Esophagus muscularis mucosa (tissue), 4 donors: ENCODE measurements at regions of chr9 and their contacts with region 1.

Region 1: GRCh38 chr9:5437254-5438216 is at the start of gene PLGRKT:
- DNase-seq: peak; percentile 99
- H3K4me3 ChIP-seq: peak within 1 kb of the TSS; percentile 60 to 67 (median 66)
- H3K27ac ChIP-seq: peak within 1 kb of the TSS; percentile 87 to 94 (median 88)
- H3K4me1 ChIP-seq: peaks cover 16 to 27% (median 21%) of the 10 kb centered on the region in 4 donors
- H3K27me3 ChIP-seq: no peaks in the 10 kb centered on the region
- CTCF ChIP-seq: peak; percentile 18 to 27 (median 22)
- EP300 ChIP-seq: no peak
- POLR2A ChIP-seq: peak; percentile 70
- total RNA-seq, gene PLGRKT: 11.1 to 18.3 (median 11.7) TPM

Region 2: GRCh38 chr9:5095795-5096194 is 341.7 kb before region 1 on chr9:
- intact Hi-C with region 1: no loop called
- DNase-seq: no peak
- H3K4me3 ChIP-seq: no peak overlapping the region
- H3K27ac ChIP-seq: no peak overlapping the region
- H3K4me1 ChIP-seq: no peaks in the 10 kb centered on the region
- H3K27me3 ChIP-seq: no peaks in the 10 kb centered on the region
- CTCF ChIP-seq: no peak
- EP300 ChIP-seq: no peak
- POLR2A ChIP-seq: no peak

Region 3: GRCh38 chr9:5278486-5278885 is 159.0 kb before region 1 on chr9:
- intact Hi-C with region 1: no loop called
- DNase-seq: no peak
- H3K4me3 ChIP-seq: no peak overlapping the region
- H3K27ac ChIP-seq: no peak overlapping the region
- H3K4me1 ChIP-seq: no peaks in the 10 kb centered on the region
- H3K27me3 ChIP-seq: no peaks in the 10 kb centered on the region
- CTCF ChIP-seq: no peak
- EP300 ChIP-seq: no peak
- POLR2A ChIP-seq: no peak

Region 4: DNA sequence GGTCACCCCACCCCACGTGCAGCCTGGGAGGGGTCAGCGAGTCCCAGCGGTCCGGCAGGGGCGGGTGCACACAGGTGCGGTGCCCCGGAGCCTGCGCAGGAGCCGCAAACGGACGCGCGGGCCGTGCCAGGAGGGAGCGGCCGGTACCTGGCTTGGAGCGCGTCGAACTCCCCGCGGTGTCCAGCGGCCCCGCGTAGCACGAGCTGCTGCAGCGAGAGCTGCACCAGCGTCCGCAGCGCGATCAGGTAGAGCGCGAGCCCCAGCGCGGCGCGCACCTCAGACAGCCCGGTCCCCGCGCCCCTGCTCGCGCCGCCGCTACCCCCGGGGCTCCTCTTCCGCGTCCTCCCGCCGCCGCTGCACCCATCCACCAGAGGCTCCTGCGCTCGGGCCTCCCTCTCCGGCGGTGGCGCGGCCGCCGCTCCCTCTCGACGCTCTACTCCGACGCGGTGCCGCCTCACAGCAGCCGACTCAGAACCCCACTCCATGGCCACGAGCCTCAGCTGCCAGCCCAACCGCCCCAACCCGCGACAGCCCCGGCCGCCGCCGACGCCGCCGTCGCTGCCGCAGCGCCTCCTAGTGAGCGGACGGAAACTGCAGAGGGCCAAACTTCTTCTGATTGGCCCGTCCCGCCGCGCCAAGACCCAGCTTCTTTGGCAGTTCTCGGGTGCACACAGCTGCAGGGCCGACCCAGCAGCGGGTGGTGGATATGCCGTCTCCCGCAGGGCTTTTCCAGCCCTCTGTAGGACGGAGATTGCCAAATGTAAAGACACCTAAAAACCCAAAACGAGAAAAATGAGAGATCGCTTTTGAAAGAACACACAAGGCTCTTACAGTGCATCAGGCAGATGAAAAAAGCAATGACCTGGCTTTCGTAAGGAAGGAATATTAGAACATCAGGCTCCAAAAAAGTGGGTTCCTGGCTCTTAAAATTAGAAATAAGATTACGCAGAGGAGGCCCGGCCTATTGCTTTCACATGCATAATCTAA is 395.3 kb after region 1 on chr9 and contains the start of gene ERMP1:
- intact Hi-C with region 1: loop called (anchors 5 kb)
- DNase-seq: peak; percentile 94
- H3K4me3 ChIP-seq: peak within 1 kb of the TSS; percentile 73 to 87 (median 84)
- H3K27ac ChIP-seq: peak within 1 kb of the TSS; percentile 74 to 81 (median 79)
- H3K4me1 ChIP-seq: peaks cover 11 to 31% (median 26%) of the 10 kb centered on the region in 4 donors
- H3K27me3 ChIP-seq: no peaks in the 10 kb centered on the region
- CTCF ChIP-seq: peak; percentile 78 to 96 (median 79)
- EP300 ChIP-seq: no peak
- POLR2A ChIP-seq: peak; percentile 6
- total RNA-seq, gene ERMP1: 7.3 to 10.0 (median 9.4) TPM